Calu3 (cell line): ENCODE measurements at regions of chr17 and their contacts with region 1.

Region 1: DNA sequence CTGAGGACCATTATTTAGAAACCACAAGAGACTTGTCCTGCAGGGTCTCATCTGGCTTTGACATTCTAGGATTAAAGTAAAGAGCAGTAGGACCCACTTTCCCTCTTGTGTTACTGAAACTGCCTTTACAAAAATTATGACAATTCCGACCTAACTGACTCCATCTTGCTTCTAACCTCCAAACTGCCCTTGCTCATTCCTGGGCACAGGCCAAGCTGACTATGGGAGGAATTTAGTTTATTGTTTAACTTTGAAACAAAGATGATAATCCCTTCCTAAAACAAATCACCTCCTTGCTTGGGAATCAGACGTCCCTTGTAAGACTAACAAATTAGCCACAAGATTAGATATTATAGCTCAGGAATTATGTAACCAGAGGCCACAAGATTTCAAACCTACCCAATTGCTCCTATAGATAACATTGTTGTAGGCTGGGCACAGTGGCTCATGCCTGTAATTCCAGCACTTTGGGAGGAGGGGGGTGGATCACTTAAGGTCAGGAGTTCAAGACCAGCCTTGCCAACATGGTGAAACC is 87.0 kb upstream of the FBXO47 start:
- DNase-seq: no peak
- H3K4me3 Mint-ChIP-seq: no peak overlapping the region
- H3K27ac Mint-ChIP-seq: no peak overlapping the region
- H3K4me1 Mint-ChIP-seq: peaks cover 23% of the 10 kb centered on the region
- H3K27me3 Mint-ChIP-seq: peaks cover 51% of the 10 kb centered on the region
- CTCF ChIP-seq: no peak

Region 2: DNA sequence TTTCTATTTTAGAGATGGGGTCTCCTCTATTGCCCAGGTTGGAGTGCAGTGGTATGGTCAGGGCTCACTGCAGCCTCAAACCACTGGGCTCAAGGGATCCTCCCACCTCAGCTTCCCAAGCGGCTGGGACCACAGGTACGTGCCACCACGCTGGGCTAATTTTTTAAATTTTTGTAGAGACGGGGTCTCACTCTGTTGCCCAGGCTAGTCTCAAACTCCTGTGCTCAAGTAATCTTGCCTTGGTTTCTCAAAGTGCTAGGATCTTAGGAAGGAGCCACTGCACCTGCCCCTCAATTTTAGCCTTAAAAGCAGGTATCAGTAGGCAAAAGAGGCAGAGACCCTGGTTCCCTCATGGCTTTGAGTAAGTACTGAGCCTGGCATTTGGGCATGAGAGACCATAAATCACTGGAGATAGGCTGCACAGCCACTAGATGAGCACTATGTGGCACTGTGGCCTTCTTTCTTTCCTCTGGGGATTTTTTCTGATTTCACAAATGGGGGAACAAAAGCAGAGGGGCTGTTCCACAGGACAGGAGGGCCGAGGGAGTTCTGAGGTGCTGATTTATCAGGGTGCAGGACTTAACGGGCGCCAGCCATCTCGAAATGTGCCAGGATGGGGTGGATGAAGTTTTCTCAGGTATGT is 15.1 kb after region 1 on chr17:
- CTCF ChIA-PET with region 1: interaction called, 12 read pairs
- intact Hi-C with region 1: no loop called
- DNase-seq: peak; percentile 67
- H3K4me3 Mint-ChIP-seq: no peak overlapping the region
- H3K27ac Mint-ChIP-seq: no peak overlapping the region
- H3K4me1 Mint-ChIP-seq: peaks cover 7% of the 10 kb centered on the region
- H3K27me3 Mint-ChIP-seq: peaks cover 89% of the 10 kb centered on the region
- CTCF ChIP-seq: peak; percentile 92